Right cardiac atrium (tissue), 5 donors: ENCODE measurements at regions of chr12 and their contacts with region 1.

Region 1: GRCh38 chr12:104108755-104109445 is 29.1 kb downstream of the NFYB start:
- DNase-seq: peak; percentile 61 to 89 (median 83)
- ATAC-seq: peak; percentile 69 to 81
- H3K4me3 ChIP-seq: no peak overlapping the region
- H3K27ac ChIP-seq: no peak overlapping the region
- H3K4me1 ChIP-seq: no peaks in the 10 kb centered on the region
- H3K27me3 ChIP-seq: no peaks in the 10 kb centered on the region

Region 2: DNA sequence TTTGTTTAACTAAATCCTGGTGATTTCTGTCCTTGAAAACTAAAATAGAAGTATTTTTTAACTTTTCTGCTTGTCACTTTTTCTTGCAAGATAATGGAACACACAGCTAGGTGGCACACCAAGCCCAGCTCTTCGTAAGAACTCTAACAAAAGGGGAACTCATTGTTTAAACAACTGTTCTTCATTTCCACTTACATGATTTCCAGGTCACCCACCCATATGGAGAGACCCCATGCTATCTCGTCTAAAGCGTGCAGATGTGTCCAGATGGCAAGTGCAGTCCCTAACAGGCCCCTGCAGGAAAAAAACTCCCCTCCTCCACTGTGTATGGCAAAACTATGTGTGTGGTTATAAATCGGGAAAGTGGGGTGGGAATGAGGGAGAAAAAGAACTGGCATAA is 224.6 kb before region 1 on chr12:
- intact Hi-C with region 1: loop called in 2 of 4 experiments (anchors 5 kb)
- DNase-seq: no peak
- ATAC-seq: peak in 1 of 2 donors; percentile 40
- H3K4me3 ChIP-seq: no peak overlapping the region
- H3K27ac ChIP-seq: no peak overlapping the region
- H3K4me1 ChIP-seq: no peaks in the 10 kb centered on the region
- H3K27me3 ChIP-seq: no peaks in the 10 kb centered on the region

Region 3: GRCh38 chr12:103965590-103966504 is 143.1 kb before region 1 on chr12 and contains the start of gene TDG:
- intact Hi-C with region 1: loop called in 1 of 4 experiments (anchors 10 kb)
- DNase-seq: peak; percentile 99
- ATAC-seq: peak; percentile 99
- H3K4me3 ChIP-seq: peak within 1 kb of the TSS; percentile 81
- H3K27ac ChIP-seq: peak within 1 kb of the TSS; percentile 92
- H3K4me1 ChIP-seq: peaks cover 5% of the 10 kb centered on the region
- H3K27me3 ChIP-seq: no peaks in the 10 kb centered on the region
- total RNA-seq, gene TDG: 10.6 to 17.7 (median 12.4) TPM